Dendritic cell treated with granulocyte-macrophage colony-stimulating factor and Interleukin-4, amounts not matched to agents 40 ng/mL and 50 ng/mL, for 4 days (primary cell): ENCODE measurements at regions of chr5 and their contacts with region 1.

Region 1: GRCh38 chr5:66144074-66144833 is at the start of gene SREK1:
- H3K4me3 Mint-ChIP-seq: peak within 1 kb of the TSS; percentile 89
- H3K27ac Mint-ChIP-seq: peak within 1 kb of the TSS; percentile 99
- H3K4me1 Mint-ChIP-seq: peaks cover 9% of the 10 kb centered on the region
- H3K27me3 Mint-ChIP-seq: no peaks in the 10 kb centered on the region

Region 2: GRCh38 chr5:65562731-65563701 is 581.2 kb before region 1 on chr5 and contains the starts of genes CENPK and PPWD1:
- intact Hi-C with region 1: loop called (anchors 10 kb)
- H3K4me3 Mint-ChIP-seq: peak within 1 kb of the TSS; percentile 97
- H3K27ac Mint-ChIP-seq: peak within 1 kb of the TSS; percentile 95
- H3K4me1 Mint-ChIP-seq: peaks cover 22% of the 10 kb centered on the region
- H3K27me3 Mint-ChIP-seq: no peaks in the 10 kb centered on the region

Region 3: DNA sequence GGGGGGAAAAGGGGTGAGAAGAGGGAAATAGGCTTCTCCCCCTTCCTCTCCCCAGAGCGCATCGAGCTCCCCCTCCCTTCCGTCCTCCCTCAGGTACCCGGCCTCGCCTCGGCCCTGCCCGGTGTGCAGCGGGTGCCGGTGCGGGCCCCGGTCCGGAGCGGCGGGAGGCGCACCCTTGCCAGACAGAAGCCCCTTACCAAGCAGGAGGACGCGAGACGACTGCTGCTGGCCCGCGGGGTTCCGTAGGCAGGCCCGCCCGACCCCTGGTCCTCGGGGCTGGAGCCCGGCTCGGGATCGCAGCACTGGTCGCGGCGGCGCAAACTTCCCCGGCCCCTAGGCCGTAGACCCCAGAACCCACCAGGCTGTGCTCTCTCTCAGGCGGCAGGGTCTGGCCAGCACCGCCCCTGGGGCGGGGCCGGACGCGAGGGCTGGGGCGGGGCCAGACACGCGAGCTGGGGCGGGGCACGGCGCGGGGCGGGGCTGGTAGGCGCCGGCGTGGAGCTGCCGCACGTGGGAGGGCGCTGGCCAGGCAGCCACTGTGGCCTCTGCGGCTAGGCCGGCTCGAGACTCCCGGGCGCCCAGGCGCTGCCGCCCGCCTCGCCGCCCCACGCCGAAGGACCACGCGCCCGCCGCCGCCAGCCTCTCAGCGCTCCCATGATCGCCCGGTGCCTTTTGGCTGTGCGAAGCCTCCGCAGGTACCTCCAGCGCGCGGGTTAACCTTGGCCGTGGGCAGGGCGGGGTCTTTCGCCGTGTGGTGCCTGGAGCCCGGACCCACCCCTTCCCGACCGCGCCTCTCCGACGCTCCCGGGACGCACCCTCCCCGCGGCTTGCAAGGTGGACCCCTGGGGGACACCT is 422.3 kb before region 1 on chr5 and contains the starts of genes NLN and SGTB:
- intact Hi-C with region 1: loop called (anchors 1 kb)
- H3K4me3 Mint-ChIP-seq: peak within 1 kb of the TSS; percentile 94
- H3K27ac Mint-ChIP-seq: peak within 1 kb of the TSS; percentile 97
- H3K4me1 Mint-ChIP-seq: peaks cover 19% of the 10 kb centered on the region
- H3K27me3 Mint-ChIP-seq: no peaks in the 10 kb centered on the region

Region 4: GRCh38 chr5:65774346-65774745 is 369.9 kb before region 1 on chr5:
- intact Hi-C with region 1: no loop called
- H3K4me3 Mint-ChIP-seq: no peak overlapping the region
- H3K27ac Mint-ChIP-seq: no peak overlapping the region
- H3K4me1 Mint-ChIP-seq: no peaks in the 10 kb centered on the region
- H3K27me3 Mint-ChIP-seq: no peaks in the 10 kb centered on the region

Region 5: GRCh38 chr5:65871182-65871581 is 273.1 kb before region 1 on chr5:
- intact Hi-C with region 1: no loop called
- H3K4me3 Mint-ChIP-seq: no peak overlapping the region
- H3K27ac Mint-ChIP-seq: no peak overlapping the region
- H3K4me1 Mint-ChIP-seq: no peaks in the 10 kb centered on the region
- H3K27me3 Mint-ChIP-seq: no peaks in the 10 kb centered on the region

Region 6: GRCh38 chr5:66209350-66209749 is 65.1 kb after region 1 on chr5:
- intact Hi-C with region 1: no loop called
- H3K4me3 Mint-ChIP-seq: no peak overlapping the region
- H3K27ac Mint-ChIP-seq: no peak overlapping the region
- H3K4me1 Mint-ChIP-seq: no peaks in the 10 kb centered on the region
- H3K27me3 Mint-ChIP-seq: no peaks in the 10 kb centered on the region